ENCODE measurements at regions of chr9 and their contacts with region 1.

Region 1: DNA sequence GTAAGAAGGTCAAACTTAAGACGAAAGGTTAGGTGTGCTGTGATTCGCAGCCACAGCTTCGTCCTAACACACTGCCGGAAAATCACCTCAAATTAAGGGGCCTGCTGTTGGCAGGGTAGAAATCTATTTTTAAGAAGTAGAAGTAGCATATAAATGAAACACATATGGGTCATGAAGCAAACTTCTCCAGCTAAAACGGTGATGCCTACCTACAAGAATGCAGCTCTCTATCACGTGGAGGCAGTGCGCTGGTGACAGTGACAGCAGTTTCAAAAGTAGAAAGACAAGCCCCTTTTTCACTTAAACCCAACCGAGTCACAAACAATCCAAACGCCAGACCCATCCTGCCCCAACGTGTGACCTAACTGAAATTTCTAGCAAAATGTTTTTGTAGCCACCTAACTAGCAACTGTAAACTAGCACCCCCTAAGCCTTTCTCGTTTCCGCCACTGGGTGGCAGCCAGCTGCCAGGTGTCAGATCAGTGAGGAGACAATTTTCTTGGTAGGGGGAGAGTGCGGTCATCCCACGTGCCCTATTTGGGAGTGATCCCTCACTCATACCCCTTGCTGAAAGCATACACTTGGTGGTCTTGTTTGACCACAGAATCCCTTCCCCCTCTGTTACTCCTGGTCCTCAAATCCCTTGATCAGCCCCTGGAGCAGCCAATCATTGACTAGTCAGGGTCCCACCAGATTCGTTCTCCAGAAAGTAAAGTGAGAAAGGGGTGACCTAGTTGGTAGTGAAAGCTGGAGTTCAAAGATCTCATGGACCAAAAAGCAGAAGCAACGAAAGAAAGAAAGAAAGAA is 71.8 kb upstream of the MAMDC2 start:
- H3K4me3 ChIP-seq: no peak overlapping the region
- H3K27ac ChIP-seq: no peak overlapping the region
- H3K4me1 ChIP-seq: no peaks in the 10 kb centered on the region
- CTCF ChIP-seq: peak; percentile 55; the same call in 1 of the 2 replicates

Region 2: GRCh38 chr9:69931340-69931739 is 40.5 kb before region 1 on chr9:
- CTCF ChIA-PET with region 1: no interaction called
- POLR2A ChIA-PET with region 1: no interaction called
- H3K4me3 ChIP-seq: no peak overlapping the region
- H3K27ac ChIP-seq: no peak overlapping the region
- H3K4me1 ChIP-seq: no peaks in the 10 kb centered on the region
- CTCF ChIP-seq: no peak

Region 3: GRCh38 chr9:69961830-69962229 is 10.0 kb before region 1 on chr9:
- CTCF ChIA-PET with region 1: interaction called, 28 read pairs
- POLR2A ChIA-PET with region 1: no interaction called
- H3K4me3 ChIP-seq: no peak overlapping the region
- H3K27ac ChIP-seq: no peak overlapping the region
- H3K4me1 ChIP-seq: no peaks in the 10 kb centered on the region
- CTCF ChIP-seq: no peak

Region 4: GRCh38 chr9:69981686-69982450 is 10.0 kb after region 1 on chr9:
- CTCF ChIA-PET with region 1: interaction called, 31 read pairs
- POLR2A ChIA-PET with region 1: no interaction called
- H3K4me3 ChIP-seq: no peak overlapping the region
- H3K27ac ChIP-seq: no peak overlapping the region
- H3K4me1 ChIP-seq: no peaks in the 10 kb centered on the region
- CTCF ChIP-seq: no peak

Region 5: GRCh38 chr9:70003901-70004714 is 32.3 kb after region 1 on chr9:
- CTCF ChIA-PET with region 1: no interaction called
- POLR2A ChIA-PET with region 1: no interaction called
- H3K4me3 ChIP-seq: no peak overlapping the region
- H3K27ac ChIP-seq: no peak overlapping the region
- H3K4me1 ChIP-seq: no peaks in the 10 kb centered on the region
- CTCF ChIP-seq: no peak

Region 6: DNA sequence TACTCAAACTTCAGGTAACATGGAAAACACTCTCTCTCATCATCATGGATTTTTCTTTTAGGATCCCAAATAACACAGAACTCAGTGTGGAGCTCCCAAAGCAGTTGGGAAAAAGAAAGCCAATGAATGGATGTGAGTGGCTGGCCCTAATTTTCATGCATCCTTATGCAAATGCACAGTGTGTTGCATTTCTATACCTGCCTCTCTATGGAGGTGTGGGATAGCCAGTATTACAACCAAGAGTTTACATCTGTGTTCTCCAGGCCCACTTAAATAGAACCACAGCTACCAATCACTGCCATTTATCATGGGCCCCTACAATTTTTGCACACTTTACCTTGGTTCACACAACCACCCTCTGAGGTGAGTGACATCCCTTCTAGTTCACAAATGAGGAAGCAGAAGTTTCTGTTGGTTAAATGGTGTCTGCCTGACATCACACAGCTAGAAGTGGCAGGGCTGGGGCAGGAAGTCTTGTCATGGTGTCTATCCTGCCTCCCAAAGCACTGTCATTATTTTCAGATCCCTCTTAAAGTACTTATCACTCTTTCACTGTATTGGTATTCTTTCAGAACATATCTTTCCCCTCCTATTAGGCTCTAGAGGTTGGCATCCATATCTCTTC is 89.1 kb after region 1 on chr9:
- CTCF ChIA-PET with region 1: interaction called, 15 read pairs
- POLR2A ChIA-PET with region 1: no interaction called
- H3K4me3 ChIP-seq: no peak overlapping the region
- H3K27ac ChIP-seq: no peak overlapping the region
- H3K4me1 ChIP-seq: no peaks in the 10 kb centered on the region
- CTCF ChIP-seq: no peak

Region 7: GRCh38 chr9:70229579-70229978 is 257.7 kb after region 1 on chr9:
- CTCF ChIA-PET with region 1: interaction called, 12 read pairs
- POLR2A ChIA-PET with region 1: no interaction called
- H3K4me3 ChIP-seq: no peak overlapping the region
- H3K27ac ChIP-seq: no peak overlapping the region
- H3K4me1 ChIP-seq: no peaks in the 10 kb centered on the region
- CTCF ChIP-seq: no peak